Dorsolateral prefrontal cortex (tissue), 120 donors: ENCODE measurements at regions of chr1 and their contacts with region 1.

Region 1: DNA sequence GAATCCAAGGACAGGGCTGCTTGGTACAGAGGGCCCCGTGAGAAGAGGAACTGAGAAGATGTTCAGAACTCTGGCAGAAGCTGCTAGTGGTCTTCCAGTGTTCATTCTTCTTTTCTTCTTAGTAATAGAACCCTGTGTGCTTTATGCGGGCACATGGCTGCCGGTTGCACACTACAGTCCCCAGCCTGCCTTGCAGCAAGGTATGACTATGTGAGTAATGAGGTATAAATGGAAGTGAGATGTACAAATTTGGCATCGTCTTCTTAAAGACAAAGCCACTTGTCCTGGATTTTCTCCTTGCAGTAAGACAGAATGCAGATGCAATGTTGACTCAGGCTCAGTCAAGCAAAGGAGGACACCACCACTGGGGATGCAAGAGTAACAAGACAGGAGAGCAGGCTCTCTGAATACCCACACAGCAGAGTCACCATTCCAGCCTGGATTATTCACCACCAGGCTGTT is 15.0 kb upstream of the ATP1B1 start:
- DNase-seq: peak in 3 of 10 donors; percentile 49 to 70 (median 67)
- H3K4me3 ChIP-seq: peak overlapping the region in 1 of 59 donors; percentile 4
- H3K27ac ChIP-seq: peak overlapping the region; percentile 77 to 99 (median 95)
- H3K27me3 ChIP-seq: no peaks in the 10 kb centered on the region
- CTCF ChIP-seq: peak in 1 of 56 donors; percentile 14

Region 2: DNA sequence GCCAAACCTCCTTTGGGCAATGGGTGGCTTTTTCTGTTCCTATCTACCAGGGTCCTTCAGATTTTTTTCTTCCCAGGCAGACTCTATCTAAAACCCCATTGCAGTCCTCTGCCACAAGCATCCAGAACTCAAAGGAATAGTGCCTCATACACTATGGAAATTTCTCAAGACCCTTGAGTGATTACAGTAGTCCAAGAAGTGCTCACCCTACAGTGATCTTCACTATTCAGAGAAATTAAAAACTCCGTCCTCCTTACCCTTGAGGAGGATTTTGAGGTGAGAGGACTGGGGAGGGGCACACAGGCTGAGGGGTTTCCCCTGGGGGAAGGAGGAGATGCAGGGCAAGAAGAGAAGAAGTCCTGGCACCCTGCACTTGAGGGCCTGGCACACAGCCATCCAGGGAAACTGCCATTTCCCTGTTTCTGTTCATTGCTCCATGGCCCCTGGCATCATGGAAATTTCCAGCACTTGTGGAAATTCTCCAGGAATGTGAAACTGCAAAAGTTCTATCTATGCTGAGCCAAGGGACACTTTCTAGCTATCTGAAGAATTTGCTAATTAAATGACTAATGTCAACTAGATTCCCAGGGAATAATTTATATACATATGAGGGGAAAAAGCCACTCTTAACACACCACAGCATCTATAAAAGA is 87.5 kb before region 1 on chr1:
- intact Hi-C with region 1: loop called in 1 of 2 experiments (anchors 5 kb)
- DNase-seq: no peak
- H3K4me3 ChIP-seq: no peak overlapping the region
- H3K27ac ChIP-seq: no peak overlapping the region
- H3K27me3 ChIP-seq: no peaks in the 10 kb centered on the region
- CTCF ChIP-seq: no peak

Region 3: DNA sequence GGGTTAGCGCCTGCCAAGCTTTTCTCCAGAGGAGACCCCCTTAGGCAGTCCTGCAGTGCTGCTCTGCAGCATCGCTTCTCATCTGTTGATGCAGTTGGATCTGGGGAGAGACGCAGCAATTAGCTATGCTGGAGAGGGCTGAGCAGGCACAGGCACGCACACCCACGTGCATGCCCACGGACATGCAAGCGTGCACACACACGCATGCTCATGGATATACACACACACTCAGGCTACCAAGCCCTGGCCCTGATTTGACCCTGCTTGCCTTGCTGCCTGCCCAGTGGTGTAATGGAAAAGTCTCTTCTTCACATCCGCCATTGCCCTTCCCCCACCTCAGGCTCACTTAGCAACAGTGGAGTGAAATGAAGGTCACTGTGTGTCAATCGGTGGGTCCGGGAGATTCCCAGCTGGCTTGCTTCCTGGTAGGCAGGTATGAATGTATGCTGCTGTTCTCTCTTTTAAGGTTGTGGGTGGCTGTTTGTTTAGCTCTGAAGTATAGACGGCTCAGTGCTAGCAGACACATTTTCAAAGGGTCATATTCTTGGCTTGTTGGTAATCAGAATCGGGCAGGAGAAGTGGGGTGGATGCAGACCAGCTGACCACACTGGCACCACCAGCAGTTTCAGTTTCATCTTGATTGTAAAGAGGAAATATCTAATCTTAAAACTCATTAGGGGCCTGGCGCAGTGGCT is 24.5 kb after region 1 on chr1:
- intact Hi-C with region 1: no loop called
- DNase-seq: peak in 4 of 10 donors; percentile 46 to 54 (median 49)
- H3K4me3 ChIP-seq: peak overlapping the region in 55 of 59 donors; percentile 2 to 81 (median 33)
- H3K27ac ChIP-seq: peak overlapping the region in 57 of 59 donors; percentile 16 to 98 (median 71)
- H3K27me3 ChIP-seq: no peaks in the 10 kb centered on the region
- CTCF ChIP-seq: no peak

Region 4: DNA sequence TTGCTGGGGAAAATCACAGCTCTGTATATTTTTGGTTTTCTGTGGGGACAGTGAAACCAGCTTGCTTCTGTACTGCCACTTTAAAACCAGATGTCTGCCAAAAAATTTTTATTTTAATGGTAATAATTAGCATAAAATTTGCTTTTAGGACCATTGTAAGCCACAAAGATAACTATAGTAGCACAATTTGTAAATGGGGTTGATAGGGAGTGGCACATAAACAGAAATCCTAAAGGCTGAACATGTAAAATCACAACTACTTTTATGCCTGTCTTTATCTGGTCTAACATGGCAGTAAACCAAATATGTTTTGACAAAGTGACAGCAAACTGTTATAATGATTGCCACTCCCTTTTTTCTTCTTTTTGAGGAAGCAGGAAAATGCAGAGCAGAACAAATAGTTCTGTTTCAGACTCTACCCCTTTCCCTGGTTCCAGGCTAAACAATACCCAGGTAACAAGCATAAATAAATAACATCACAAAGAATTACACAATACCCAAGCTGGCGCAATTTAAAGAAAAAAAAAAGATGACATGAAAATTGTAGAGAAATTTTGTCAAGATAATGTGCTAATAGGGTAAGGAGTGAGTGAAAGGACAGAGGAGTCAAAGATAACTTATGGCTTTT is 359.8 kb after region 1 on chr1:
- intact Hi-C with region 1: no loop called
- DNase-seq: no peak
- H3K4me3 ChIP-seq: no peak overlapping the region
- H3K27ac ChIP-seq: no peak overlapping the region
- H3K27me3 ChIP-seq: no peaks in the 10 kb centered on the region
- CTCF ChIP-seq: no peak